ENCODE measurements at regions of chr12 and their contacts with region 1.

Region 1: DNA sequence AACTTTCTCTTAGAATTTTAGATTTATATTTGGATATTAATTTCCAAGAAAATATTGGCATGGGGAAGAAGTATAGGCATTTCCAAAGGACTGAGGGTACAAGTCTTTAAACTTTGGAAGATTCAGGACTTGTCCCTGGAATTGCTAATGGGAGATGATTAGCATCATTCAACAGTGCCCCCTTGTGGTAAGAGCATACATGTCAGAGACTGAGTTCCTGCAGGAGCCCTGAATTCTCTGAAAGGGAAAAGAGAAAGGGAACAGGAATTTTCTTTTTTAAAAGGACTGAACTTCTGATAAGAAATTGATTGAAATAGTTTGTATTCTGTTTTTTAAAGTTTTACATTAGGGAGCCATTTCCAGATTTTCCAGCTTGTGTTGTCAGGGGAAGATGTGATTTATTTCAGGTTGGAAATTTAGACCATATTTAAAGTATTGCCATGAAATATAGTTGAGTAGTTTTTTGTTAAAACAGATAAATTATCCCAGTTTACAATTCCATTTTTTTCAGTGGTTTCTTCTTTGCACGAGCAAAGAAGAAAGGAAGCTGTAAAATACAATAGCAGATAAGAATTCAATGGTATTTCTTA is 44.0 kb upstream of the REP15 start:
- DNase-seq: peak; percentile 58
- ATAC-seq: peak; percentile 78
- H3K4me3 ChIP-seq: no peak overlapping the region
- H3K27ac ChIP-seq: no peak overlapping the region; the same call in 1 of the 2 replicates
- H3K4me1 ChIP-seq: no peaks in the 10 kb centered on the region
- H3K27me3 ChIP-seq: no peaks in the 10 kb centered on the region
- CTCF ChIP-seq: peak; percentile 68 to 87 (median 82); a peak in 5 of 6 replicates
- POLR2A ChIP-seq: no peak
- RAD21 ChIP-seq: peak; percentile 83

Region 2: GRCh38 chr12:27383429-27384260 is 268.6 kb before region 1 on chr12:
- CTCF ChIA-PET with region 1: no interaction called
- POLR2A ChIA-PET with region 1: no interaction called
- RAD21 ChIA-PET with region 1: no interaction called
- intact Hi-C with region 1: loop called (anchors 1 kb)
- DNase-seq: peak; percentile 61
- ATAC-seq: peak; percentile 96
- H3K4me3 ChIP-seq: no peak overlapping the region
- H3K27ac ChIP-seq: no peak overlapping the region
- H3K4me1 ChIP-seq: peaks cover 0 to 10% of the 10 kb centered on the region in 2 experiments; a peak in 2 of 4 replicates
- H3K27me3 ChIP-seq: no peaks in the 10 kb centered on the region
- CTCF ChIP-seq: peak; percentile 43 to 94 (median 89); a peak in 5 of 6 replicates
- POLR2A ChIP-seq: no peak
- RAD21 ChIP-seq: peak; percentile 65

Region 3: DNA sequence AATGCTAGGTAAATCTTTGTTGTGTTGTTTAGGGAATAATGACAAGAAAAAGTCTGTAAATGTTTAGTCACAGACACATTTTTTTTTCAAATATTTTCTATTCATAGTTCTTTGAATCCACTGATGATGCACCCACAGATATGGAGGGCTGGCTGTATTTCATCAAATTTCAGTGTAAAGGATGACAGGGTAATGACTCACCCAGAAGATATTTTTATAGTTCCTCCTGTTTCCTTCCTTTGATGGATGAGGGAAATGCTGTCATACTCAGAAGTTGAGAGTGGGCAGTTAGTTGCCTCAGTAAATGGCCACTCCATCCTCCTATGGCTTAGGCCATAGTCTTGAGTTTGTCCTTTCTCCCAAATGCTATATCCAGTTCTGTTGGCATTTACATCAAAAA is 33.0 kb before region 1 on chr12:
- CTCF ChIA-PET with region 1: no interaction called
- POLR2A ChIA-PET with region 1: no interaction called
- RAD21 ChIA-PET with region 1: no interaction called
- intact Hi-C with region 1: no loop called
- DNase-seq: peak; percentile 81
- ATAC-seq: peak; percentile 66
- H3K4me3 ChIP-seq: peak overlapping the region in 1 of 2 experiments; percentile 17; a peak in 1 of 4 replicates
- H3K27ac ChIP-seq: peak overlapping the region; percentile 96
- H3K4me1 ChIP-seq: peaks cover 93 to 99% of the 10 kb centered on the region in 2 experiments
- H3K27me3 ChIP-seq: no peaks in the 10 kb centered on the region
- CTCF ChIP-seq: no peak
- POLR2A ChIP-seq: no peak
- RAD21 ChIP-seq: peak; percentile 10; the same call in 1 of the 2 replicates

Region 4: DNA sequence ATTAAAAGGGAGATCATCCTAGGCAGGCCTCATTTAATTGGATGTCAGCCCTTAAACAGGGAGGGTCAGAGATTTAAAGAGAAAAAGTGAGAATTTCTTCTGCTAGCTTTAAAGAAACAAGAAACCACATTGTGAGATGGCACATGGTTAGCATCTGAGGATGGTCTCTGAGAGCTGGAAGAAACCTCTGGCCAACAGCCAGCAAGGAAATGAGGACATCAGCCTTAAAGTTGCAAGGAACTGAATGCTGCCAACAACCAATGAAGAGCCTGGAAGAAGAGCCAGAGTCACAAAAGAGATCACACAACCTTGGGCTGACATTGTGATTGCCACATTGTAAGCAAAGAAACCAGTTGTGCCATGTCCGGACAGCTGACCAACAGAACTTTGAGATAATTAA is 1479.3 kb after region 1 on chr12:
- CTCF ChIA-PET with region 1: no interaction called
- POLR2A ChIA-PET with region 1: no interaction called
- RAD21 ChIA-PET with region 1: no interaction called
- intact Hi-C with region 1: no loop called
- DNase-seq: no peak
- ATAC-seq: no peak
- H3K4me3 ChIP-seq: no peak overlapping the region
- H3K27ac ChIP-seq: no peak overlapping the region
- H3K4me1 ChIP-seq: no peaks in the 10 kb centered on the region
- H3K27me3 ChIP-seq: no peaks in the 10 kb centered on the region
- CTCF ChIP-seq: no peak
- POLR2A ChIP-seq: no peak
- RAD21 ChIP-seq: no peak

Measured in HCT116 (cell line).